IMR-90 (cell line): ENCODE measurements at regions of chr5 and their contacts with region 1.

Region 1: GRCh38 chr5:55675119-55675518 is 37.0 kb downstream of the SLC38A9 start:
- DNase-seq: peak; percentile 3
- ATAC-seq: peak; percentile 48
- H3K4me3 ChIP-seq: no peak overlapping the region
- H3K27ac ChIP-seq: no peak overlapping the region
- H3K4me1 ChIP-seq: peaks cover 2% of the 10 kb centered on the region
- H3K27me3 ChIP-seq: no peaks in the 10 kb centered on the region
- CTCF ChIP-seq: no peak
- POLR2A ChIP-seq: no peak
- RAD21 ChIP-seq: no peak

Region 2: DNA sequence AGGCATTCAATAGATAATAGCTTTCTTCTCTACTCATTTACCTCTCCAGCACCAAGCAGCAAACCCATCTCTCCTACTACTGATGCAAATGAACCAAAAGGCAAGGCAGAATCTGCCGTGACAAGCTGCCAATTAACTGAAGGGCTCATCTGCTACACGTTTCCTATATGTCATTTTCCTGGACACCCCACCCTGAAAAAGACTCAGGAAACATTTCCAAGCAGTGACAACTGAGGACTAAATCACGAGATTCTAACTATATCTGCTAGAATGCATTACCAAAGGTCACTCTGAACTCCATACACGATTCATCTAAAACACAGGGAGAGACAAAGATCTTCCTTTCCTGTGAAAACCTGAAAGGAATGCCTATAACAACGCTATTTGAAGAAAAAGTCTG is 153.2 kb before region 1 on chr5:
- CTCF ChIA-PET with region 1: no interaction called
- POLR2A ChIA-PET with region 1: no interaction called
- dilution Hi-C with region 1: no loop called
- in situ Hi-C with region 1: no loop called
- intact Hi-C with region 1: no loop called
- DNase-seq: no peak
- ATAC-seq: no peak
- H3K4me3 ChIP-seq: no peak overlapping the region
- H3K27ac ChIP-seq: no peak overlapping the region
- H3K4me1 ChIP-seq: no peaks in the 10 kb centered on the region; the same call in 1 of the 2 replicates
- H3K27me3 ChIP-seq: no peaks in the 10 kb centered on the region
- CTCF ChIP-seq: no peak
- POLR2A ChIP-seq: no peak
- RAD21 ChIP-seq: no peak

Region 3: GRCh38 chr5:55601204-55601618 is 73.9 kb before region 1 on chr5:
- CTCF ChIA-PET with region 1: no interaction called
- POLR2A ChIA-PET with region 1: no interaction called
- dilution Hi-C with region 1: no loop called
- in situ Hi-C with region 1: no loop called
- intact Hi-C with region 1: loop called (anchors 5 kb)
- DNase-seq: peak; percentile 61
- ATAC-seq: peak; percentile 52
- H3K4me3 ChIP-seq: no peak overlapping the region
- H3K27ac ChIP-seq: peak overlapping the region; percentile 57
- H3K4me1 ChIP-seq: peaks cover 27% of the 10 kb centered on the region
- H3K27me3 ChIP-seq: no peaks in the 10 kb centered on the region
- CTCF ChIP-seq: no peak
- POLR2A ChIP-seq: peak; percentile 31; the same call in 1 of the 2 replicates
- RAD21 ChIP-seq: no peak